B cell (primary cell): ENCODE measurements at regions of chr7 and their contacts with region 1.

Region 1: GRCh38 chr7:44921607-44922359 is 36.5 kb upstream of the PURB start:
- DNase-seq: peak; percentile 87
- ATAC-seq: peak; percentile 98
- H3K4me3 ChIP-seq: no peak overlapping the region
- H3K4me3 Mint-ChIP-seq: no peak overlapping the region
- H3K27ac ChIP-seq: no peak overlapping the region
- H3K27ac Mint-ChIP-seq: peak overlapping the region; percentile 53
- H3K4me1 ChIP-seq: no peaks in the 10 kb centered on the region
- H3K4me1 Mint-ChIP-seq: peaks cover 2% of the 10 kb centered on the region
- H3K27me3 ChIP-seq: peaks cover 0 to 4% (median 2%) of the 10 kb centered on the region in 4 experiments
- H3K27me3 Mint-ChIP-seq: peaks cover 5% of the 10 kb centered on the region
- CTCF ChIP-seq: peak; percentile 86

Region 2: DNA sequence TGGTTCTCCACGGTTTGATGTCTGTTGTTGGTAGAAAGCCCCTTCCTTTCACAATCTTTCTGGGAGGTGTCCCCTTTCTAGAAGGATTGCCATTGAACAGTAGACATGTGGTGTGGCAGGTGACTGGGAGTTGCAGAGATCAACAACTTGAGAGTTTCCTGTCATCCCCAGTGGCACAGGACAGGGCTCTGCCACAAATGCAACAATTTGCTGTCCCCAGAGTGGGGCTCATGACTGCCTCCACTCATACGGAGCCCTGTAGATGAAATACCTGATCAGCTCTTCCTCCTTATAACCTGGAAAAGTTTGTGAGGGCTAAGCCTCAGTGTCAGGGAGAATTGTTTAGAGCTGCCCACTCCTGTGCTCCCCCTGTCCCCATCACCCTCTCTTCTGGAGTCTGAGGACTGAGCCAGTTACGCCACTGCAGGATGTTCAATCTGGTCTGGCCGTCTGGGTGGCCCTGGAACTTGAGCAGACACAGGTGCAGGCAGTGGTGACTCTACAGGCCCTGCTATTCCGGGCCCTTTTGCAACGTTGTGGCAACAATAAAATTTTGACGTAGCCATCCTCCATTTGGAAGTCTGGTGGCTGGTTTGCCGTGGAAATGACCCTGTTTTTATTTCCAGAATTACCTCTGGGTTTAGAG is 870.7 kb before region 1 on chr7:
- CTCF ChIA-PET with region 1: no interaction called
- POLR2A ChIA-PET with region 1: interaction called, 10 read pairs
- intact Hi-C with region 1: no loop called
- DNase-seq: no peak
- ATAC-seq: no peak
- H3K4me3 ChIP-seq: no peak overlapping the region
- H3K4me3 Mint-ChIP-seq: no peak overlapping the region
- H3K27ac ChIP-seq: peak overlapping the region in 1 of 2 donors; percentile 51
- H3K27ac Mint-ChIP-seq: peak overlapping the region; percentile 59
- H3K4me1 ChIP-seq: peaks cover 73 to 83% of the 10 kb centered on the region in 2 donors
- H3K4me1 Mint-ChIP-seq: peaks cover 81% of the 10 kb centered on the region
- H3K27me3 ChIP-seq: no peaks in the 10 kb centered on the region
- H3K27me3 Mint-ChIP-seq: no peaks in the 10 kb centered on the region
- CTCF ChIP-seq: no peak

Region 3: GRCh38 chr7:44587843-44588711 is 333.7 kb before region 1 on chr7:
- CTCF ChIA-PET with region 1: interaction called, 7 read pairs
- POLR2A ChIA-PET with region 1: no interaction called
- intact Hi-C with region 1: loop called (anchors 1 kb)
- DNase-seq: peak; percentile 78
- ATAC-seq: peak; percentile 83
- H3K4me3 ChIP-seq: no peak overlapping the region
- H3K4me3 Mint-ChIP-seq: no peak overlapping the region
- H3K27ac ChIP-seq: no peak overlapping the region
- H3K27ac Mint-ChIP-seq: no peak overlapping the region
- H3K4me1 ChIP-seq: peaks cover 1 to 3% of the 10 kb centered on the region in 2 donors
- H3K4me1 Mint-ChIP-seq: peaks cover 5% of the 10 kb centered on the region
- H3K27me3 ChIP-seq: peaks cover 0 to 2% (median 0%) of the 10 kb centered on the region in 4 experiments
- H3K27me3 Mint-ChIP-seq: peaks cover 1% of the 10 kb centered on the region
- CTCF ChIP-seq: peak; percentile 86

Region 4: DNA sequence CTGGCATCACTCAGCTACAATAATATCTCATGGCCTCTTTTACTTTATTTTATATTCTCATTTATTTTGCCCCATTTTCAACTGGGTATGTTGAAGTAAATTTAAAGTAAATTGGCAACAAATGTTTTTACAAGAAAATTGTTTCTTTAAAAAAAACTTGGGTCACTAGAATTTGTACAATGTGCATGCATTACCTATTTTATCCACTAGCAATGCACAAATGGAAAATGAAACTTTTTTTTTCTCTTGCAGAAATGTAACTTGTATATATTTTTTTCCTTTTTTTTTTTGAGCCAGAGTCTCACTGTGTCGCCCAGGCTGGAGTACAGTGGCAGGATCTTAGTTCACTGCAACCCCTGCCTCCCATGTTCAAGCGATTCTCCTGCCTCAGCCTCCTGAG is 63.6 kb before region 1 on chr7:
- CTCF ChIA-PET with region 1: interaction called, 92 read pairs
- POLR2A ChIA-PET with region 1: no interaction called
- intact Hi-C with region 1: loop called (anchors 1 kb)
- DNase-seq: no peak
- ATAC-seq: no peak
- H3K4me3 ChIP-seq: no peak overlapping the region
- H3K4me3 Mint-ChIP-seq: no peak overlapping the region
- H3K27ac ChIP-seq: no peak overlapping the region
- H3K27ac Mint-ChIP-seq: no peak overlapping the region
- H3K4me1 ChIP-seq: no peaks in the 10 kb centered on the region
- H3K4me1 Mint-ChIP-seq: peaks cover 4% of the 10 kb centered on the region
- H3K27me3 ChIP-seq: no peaks in the 10 kb centered on the region
- H3K27me3 Mint-ChIP-seq: peaks cover 5% of the 10 kb centered on the region
- CTCF ChIP-seq: peak; percentile 43

Region 5: DNA sequence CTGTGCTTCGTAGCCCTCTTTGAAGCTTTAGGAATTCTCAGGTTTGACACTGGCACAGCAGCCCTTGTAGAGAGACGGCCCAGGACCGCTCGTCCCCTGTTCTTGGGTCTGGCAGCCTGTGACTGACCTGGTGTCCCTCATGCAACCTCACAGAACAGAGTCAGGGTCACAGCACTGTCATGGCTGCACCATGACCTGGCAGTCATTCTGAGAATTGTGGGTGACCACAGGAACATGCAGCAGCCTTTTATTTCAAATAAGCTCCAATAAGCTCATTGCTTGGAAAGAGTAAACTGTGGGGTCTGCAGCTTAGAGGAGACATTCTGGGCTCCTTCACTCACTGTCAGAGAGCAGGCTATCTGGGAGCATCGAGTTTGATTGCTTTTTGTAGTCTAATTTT is 14.5 kb after region 1 on chr7:
- CTCF ChIA-PET with region 1: interaction called, 12 read pairs
- POLR2A ChIA-PET with region 1: no interaction called
- intact Hi-C with region 1: no loop called
- DNase-seq: no peak
- ATAC-seq: no peak
- H3K4me3 ChIP-seq: no peak overlapping the region
- H3K4me3 Mint-ChIP-seq: no peak overlapping the region
- H3K27ac ChIP-seq: no peak overlapping the region
- H3K27ac Mint-ChIP-seq: no peak overlapping the region
- H3K4me1 ChIP-seq: no peaks in the 10 kb centered on the region
- H3K4me1 Mint-ChIP-seq: no peaks in the 10 kb centered on the region
- H3K27me3 ChIP-seq: no peaks in the 10 kb centered on the region
- H3K27me3 Mint-ChIP-seq: peaks cover 3% of the 10 kb centered on the region
- CTCF ChIP-seq: no peak

Region 6: DNA sequence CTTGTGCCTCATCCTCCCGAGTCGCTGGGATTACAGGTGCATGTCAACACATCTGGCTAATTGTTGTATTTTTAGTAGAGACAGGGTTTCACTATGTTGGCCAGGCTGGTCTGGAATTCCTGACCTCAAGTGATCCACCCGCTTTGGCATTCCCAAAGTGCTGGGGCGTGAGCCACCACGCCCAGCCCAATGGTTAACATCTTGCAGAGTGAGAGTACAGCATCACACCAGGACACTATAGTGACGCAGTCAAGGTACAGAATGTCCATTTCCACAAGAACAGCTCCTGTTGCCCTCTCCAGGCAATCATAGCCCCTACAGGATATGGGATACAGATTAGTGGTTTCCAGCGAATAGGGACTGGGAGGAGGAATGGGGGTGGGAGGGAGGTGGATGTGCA is 23.0 kb after region 1 on chr7:
- CTCF ChIA-PET with region 1: no interaction called
- POLR2A ChIA-PET with region 1: interaction called, 10 read pairs
- intact Hi-C with region 1: no loop called
- DNase-seq: no peak
- ATAC-seq: no peak
- H3K4me3 ChIP-seq: no peak overlapping the region
- H3K4me3 Mint-ChIP-seq: no peak overlapping the region
- H3K27ac ChIP-seq: no peak overlapping the region
- H3K27ac Mint-ChIP-seq: no peak overlapping the region
- H3K4me1 ChIP-seq: no peaks in the 10 kb centered on the region
- H3K4me1 Mint-ChIP-seq: no peaks in the 10 kb centered on the region
- H3K27me3 ChIP-seq: peaks cover 0 to 2% (median 0%) of the 10 kb centered on the region in 4 experiments
- H3K27me3 Mint-ChIP-seq: peaks cover 11% of the 10 kb centered on the region
- CTCF ChIP-seq: no peak

Region 7: GRCh38 chr7:44986218-44987053 is 64.7 kb after region 1 on chr7:
- CTCF ChIA-PET with region 1: no interaction called
- POLR2A ChIA-PET with region 1: no interaction called
- intact Hi-C with region 1: no loop called
- DNase-seq: peak; percentile 98
- ATAC-seq: peak; percentile 94
- H3K4me3 ChIP-seq: peak overlapping the region; percentile 62 to 92 (median 73)
- H3K4me3 Mint-ChIP-seq: peak overlapping the region; percentile 98
- H3K27ac ChIP-seq: peak overlapping the region; percentile 97 to 98
- H3K27ac Mint-ChIP-seq: peak overlapping the region; percentile 98
- H3K4me1 ChIP-seq: peaks cover 29 to 39% of the 10 kb centered on the region in 2 donors
- H3K4me1 Mint-ChIP-seq: peaks cover 51% of the 10 kb centered on the region
- H3K27me3 ChIP-seq: no peaks in the 10 kb centered on the region
- H3K27me3 Mint-ChIP-seq: no peaks in the 10 kb centered on the region
- CTCF ChIP-seq: no peak

Region 8: GRCh38 chr7:45044338-45044737 is 122.6 kb after region 1 on chr7:
- CTCF ChIA-PET with region 1: no interaction called
- POLR2A ChIA-PET with region 1: no interaction called
- intact Hi-C with region 1: no loop called
- DNase-seq: peak; percentile 33
- ATAC-seq: no peak
- H3K4me3 ChIP-seq: no peak overlapping the region
- H3K4me3 Mint-ChIP-seq: no peak overlapping the region
- H3K27ac ChIP-seq: peak overlapping the region in 1 of 2 donors; percentile 54
- H3K27ac Mint-ChIP-seq: peak overlapping the region; percentile 69
- H3K4me1 ChIP-seq: peaks cover 4 to 9% of the 10 kb centered on the region in 2 donors
- H3K4me1 Mint-ChIP-seq: peaks cover 26% of the 10 kb centered on the region
- H3K27me3 ChIP-seq: no peaks in the 10 kb centered on the region
- H3K27me3 Mint-ChIP-seq: no peaks in the 10 kb centered on the region
- CTCF ChIP-seq: no peak

Region 9: GRCh38 chr7:46072683-46073082 is 1150.9 kb after region 1 on chr7:
- CTCF ChIA-PET with region 1: no interaction called
- POLR2A ChIA-PET with region 1: no interaction called
- intact Hi-C with region 1: no loop called
- DNase-seq: no peak
- ATAC-seq: no peak
- H3K4me3 ChIP-seq: no peak overlapping the region
- H3K4me3 Mint-ChIP-seq: no peak overlapping the region
- H3K27ac ChIP-seq: no peak overlapping the region
- H3K27ac Mint-ChIP-seq: no peak overlapping the region
- H3K4me1 ChIP-seq: no peaks in the 10 kb centered on the region
- H3K4me1 Mint-ChIP-seq: no peaks in the 10 kb centered on the region
- H3K27me3 ChIP-seq: no peaks in the 10 kb centered on the region
- H3K27me3 Mint-ChIP-seq: peaks cover 3% of the 10 kb centered on the region
- CTCF ChIP-seq: no peak